SK-N-SH (cell line): ENCODE measurements at regions of chr3 and their contacts with region 1.

Region 1: GRCh38 chr3:146065573-146066006 is 95.4 kb downstream of the PLOD2 start:
- DNase-seq: no peak
- H3K4me3 ChIP-seq: no peak overlapping the region; a peak in 1 of 4 replicates
- H3K27ac ChIP-seq: no peak overlapping the region
- H3K4me1 ChIP-seq: no peaks in the 10 kb centered on the region
- H3K27me3 ChIP-seq: no peaks in the 10 kb centered on the region
- CTCF ChIP-seq: peak; percentile 93
- EP300 ChIP-seq: no peak
- RAD21 ChIP-seq: peak; percentile 64

Region 2: DNA sequence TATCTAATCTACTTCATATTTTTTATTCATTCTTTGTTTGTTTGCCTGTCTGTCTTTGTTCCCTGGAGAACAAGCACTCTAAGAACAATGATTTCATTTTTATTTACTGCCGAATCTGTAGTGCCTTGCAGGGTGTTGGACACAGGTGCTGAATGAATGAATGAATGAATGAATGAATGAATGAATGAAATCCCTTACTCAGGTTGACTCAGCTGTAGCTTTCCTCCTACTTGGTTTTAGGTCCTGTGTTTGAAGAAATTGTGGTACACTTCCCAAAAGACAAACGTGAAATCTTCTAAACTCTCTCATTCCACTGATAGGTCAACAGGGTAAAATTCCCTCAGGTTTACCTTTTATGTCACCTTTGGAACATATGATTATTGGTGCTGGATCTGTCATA is 74.5 kb before region 1 on chr3:
- CTCF ChIA-PET with region 1: no interaction called
- POLR2A ChIA-PET with region 1: no interaction called
- DNase-seq: no peak
- H3K4me3 ChIP-seq: no peak overlapping the region
- H3K27ac ChIP-seq: no peak overlapping the region
- H3K4me1 ChIP-seq: no peaks in the 10 kb centered on the region
- H3K27me3 ChIP-seq: no peaks in the 10 kb centered on the region
- CTCF ChIP-seq: no peak
- EP300 ChIP-seq: no peak
- RAD21 ChIP-seq: no peak

Region 3: DNA sequence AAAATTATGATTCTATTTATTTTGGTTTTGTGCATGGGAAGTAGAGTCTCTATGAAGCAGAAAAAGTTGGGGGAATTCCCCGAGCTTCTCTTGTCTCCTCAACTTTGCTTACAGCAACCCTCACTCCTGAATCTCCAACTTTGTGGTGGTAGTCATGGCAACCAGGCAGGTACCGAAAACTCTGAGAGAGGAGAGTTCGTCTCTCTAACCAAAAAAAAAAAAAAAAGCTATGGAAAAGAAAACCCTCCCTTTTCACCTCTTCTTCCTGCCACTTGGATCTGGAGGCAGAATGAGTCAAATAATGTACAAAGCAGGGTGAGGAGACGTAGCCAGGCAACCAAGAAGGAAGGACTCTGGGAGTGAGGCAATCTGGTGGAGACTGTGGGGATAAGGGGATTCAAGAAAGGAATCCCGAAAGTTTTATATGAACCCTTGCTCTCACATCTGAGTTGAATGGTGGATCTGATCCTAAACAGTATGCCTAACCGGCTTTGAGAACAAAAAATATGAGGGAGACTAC is 12.7 kb before region 1 on chr3:
- CTCF ChIA-PET with region 1: interaction called, 27 read pairs
- POLR2A ChIA-PET with region 1: no interaction called
- DNase-seq: no peak
- H3K4me3 ChIP-seq: no peak overlapping the region
- H3K27ac ChIP-seq: no peak overlapping the region
- H3K4me1 ChIP-seq: no peaks in the 10 kb centered on the region
- H3K27me3 ChIP-seq: no peaks in the 10 kb centered on the region
- CTCF ChIP-seq: no peak
- EP300 ChIP-seq: no peak
- RAD21 ChIP-seq: no peak

Region 4: GRCh38 chr3:146080578-146080977 is 15.0 kb after region 1 on chr3:
- CTCF ChIA-PET with region 1: interaction called, 12 read pairs
- POLR2A ChIA-PET with region 1: no interaction called
- DNase-seq: no peak
- H3K4me3 ChIP-seq: no peak overlapping the region
- H3K27ac ChIP-seq: no peak overlapping the region
- H3K4me1 ChIP-seq: no peaks in the 10 kb centered on the region
- H3K27me3 ChIP-seq: no peaks in the 10 kb centered on the region
- CTCF ChIP-seq: no peak
- EP300 ChIP-seq: no peak
- RAD21 ChIP-seq: no peak

Region 5: DNA sequence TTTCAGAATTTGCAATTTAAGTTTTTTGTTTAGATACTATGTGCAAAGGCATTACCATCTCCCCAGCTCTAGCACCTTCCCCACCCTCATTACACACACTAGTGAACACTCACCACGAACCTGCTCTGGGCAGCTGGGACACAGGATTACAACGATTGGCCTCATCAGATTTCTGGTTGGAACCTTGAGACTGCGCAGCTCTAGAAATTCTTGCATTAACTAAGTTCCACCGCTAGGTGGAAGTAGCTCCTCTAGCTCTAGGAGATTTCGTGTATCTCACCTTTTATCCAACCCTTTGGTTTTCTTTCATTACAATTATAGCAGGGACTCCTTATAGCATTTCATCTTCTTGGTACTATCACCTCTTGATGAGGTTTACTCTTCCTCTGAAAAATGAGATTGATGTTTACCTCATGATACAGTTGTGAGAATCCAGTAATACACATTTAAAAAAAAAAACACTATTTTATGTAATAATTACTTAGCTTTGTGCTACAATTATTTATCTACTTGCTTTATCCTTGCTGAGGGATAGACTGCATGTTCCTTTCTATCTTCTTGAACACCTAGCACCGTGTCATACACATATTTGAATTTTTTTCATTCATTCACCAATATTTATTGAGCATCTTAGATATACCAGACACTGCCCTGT is 124.1 kb after region 1 on chr3:
- CTCF ChIA-PET with region 1: interaction called, 33 read pairs
- POLR2A ChIA-PET with region 1: no interaction called
- DNase-seq: peak; percentile 40
- H3K4me3 ChIP-seq: no peak overlapping the region
- H3K27ac ChIP-seq: no peak overlapping the region
- H3K4me1 ChIP-seq: no peaks in the 10 kb centered on the region
- H3K27me3 ChIP-seq: no peaks in the 10 kb centered on the region
- CTCF ChIP-seq: peak; percentile 79
- EP300 ChIP-seq: no peak
- RAD21 ChIP-seq: peak; percentile 60

Region 6: DNA sequence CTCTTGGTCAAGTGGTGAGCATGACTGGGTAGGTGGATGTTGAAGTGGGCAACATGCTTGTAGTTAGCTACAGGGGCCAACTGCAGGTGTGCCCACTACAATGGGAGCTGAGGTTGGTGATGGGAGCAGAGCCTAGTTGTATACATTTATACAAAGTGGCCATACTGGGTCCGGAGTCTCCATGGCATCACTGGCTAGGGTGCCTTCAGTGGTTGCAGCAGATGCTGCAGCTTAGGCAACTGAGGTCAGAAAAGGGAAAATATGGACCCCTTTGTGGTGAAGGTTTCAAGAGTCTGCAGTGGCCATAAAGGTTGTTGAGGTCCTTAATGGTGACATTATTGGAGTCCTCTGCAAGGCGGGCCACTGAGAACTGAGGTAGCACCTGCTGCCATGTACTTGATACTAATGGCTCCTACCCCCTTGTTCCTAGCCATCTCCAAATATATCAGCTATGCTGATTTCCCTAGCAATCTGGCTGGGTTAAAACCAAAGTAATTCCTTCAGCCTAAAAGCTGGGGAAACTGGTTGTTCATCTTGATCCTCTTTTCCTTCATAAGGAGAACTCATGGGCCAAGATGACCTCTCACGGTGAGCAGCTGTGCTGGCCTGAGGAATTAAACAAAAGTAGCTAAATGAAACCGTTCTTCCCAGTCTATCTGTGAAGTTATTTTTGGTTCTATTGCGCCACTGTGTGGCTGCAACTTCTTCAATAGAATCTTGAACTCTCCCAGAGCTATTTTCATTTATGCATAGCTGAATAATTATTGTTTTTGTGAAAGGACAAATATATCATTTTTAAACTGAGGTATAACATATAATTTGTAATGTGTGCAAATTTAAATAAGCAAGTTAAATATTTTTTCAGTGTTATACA is 261.3 kb after region 1 on chr3:
- CTCF ChIA-PET with region 1: interaction called, 10 read pairs
- POLR2A ChIA-PET with region 1: no interaction called
- DNase-seq: peak; percentile 1
- H3K4me3 ChIP-seq: no peak overlapping the region
- H3K27ac ChIP-seq: no peak overlapping the region
- H3K4me1 ChIP-seq: no peaks in the 10 kb centered on the region
- H3K27me3 ChIP-seq: 0 out of 2 replicates have a peak, but pooled peaks cover 12% of the 10 kb centered on the region
- CTCF ChIP-seq: peak; percentile 76
- EP300 ChIP-seq: no peak
- RAD21 ChIP-seq: peak; percentile 59